ENCODE measurements at regions of chr13 and their contacts with region 1.

Region 1: DNA sequence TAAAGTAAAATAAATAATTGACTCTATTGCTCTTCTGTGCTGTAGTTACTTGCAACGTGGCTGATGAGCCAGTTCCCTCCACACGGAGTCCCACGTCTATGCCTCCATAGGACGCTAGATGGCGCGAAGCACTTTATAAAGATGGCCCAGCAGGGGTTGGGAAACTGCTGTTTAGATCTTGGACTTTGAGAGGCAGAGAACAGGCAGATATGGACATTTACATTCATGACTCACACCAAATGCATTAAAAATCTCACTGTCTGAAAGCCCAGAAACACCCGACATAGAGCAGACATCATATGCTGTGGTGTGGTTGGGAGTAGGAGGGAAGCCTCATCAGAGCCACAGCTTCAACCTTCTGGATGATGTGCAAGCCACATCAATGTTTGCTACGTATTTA is 643.1 kb upstream of the ARGLU1 start:
- DNase-seq: peak; percentile 27 to 84
- H3K4me3 ChIP-seq: no peak overlapping the region
- H3K27ac ChIP-seq: no peak overlapping the region
- H3K4me1 ChIP-seq: 0 out of 7 replicates have a peak, but pooled peaks cover 0 to 2% (median 0%) of the 10 kb centered on the region in 4 experiments
- H3K27me3 ChIP-seq: no peaks in the 10 kb centered on the region
- CTCF ChIP-seq: peak; percentile 90 to 96 (median 92)
- EP300 ChIP-seq: no peak
- POLR2A ChIP-seq: no peak
- RAD21 ChIP-seq: peak; percentile 92 to 94

Region 2: GRCh38 chr13:107234319-107235073 is 23.4 kb after region 1 on chr13:
- CTCF ChIA-PET with region 1: interaction called, 11 read pairs
- POLR2A ChIA-PET with region 1: no interaction called
- DNase-seq: no peak
- H3K4me3 ChIP-seq: no peak overlapping the region
- H3K27ac ChIP-seq: no peak overlapping the region
- H3K4me1 ChIP-seq: no peaks in the 10 kb centered on the region
- H3K27me3 ChIP-seq: no peaks in the 10 kb centered on the region
- CTCF ChIP-seq: no peak
- EP300 ChIP-seq: no peak
- POLR2A ChIP-seq: no peak
- RAD21 ChIP-seq: no peak

Region 3: GRCh38 chr13:107276936-107277335 is 65.9 kb after region 1 on chr13:
- CTCF ChIA-PET with region 1: interaction called, 10 read pairs
- POLR2A ChIA-PET with region 1: no interaction called
- DNase-seq: no peak
- H3K4me3 ChIP-seq: no peak overlapping the region
- H3K27ac ChIP-seq: no peak overlapping the region
- H3K4me1 ChIP-seq: no peaks in the 10 kb centered on the region
- H3K27me3 ChIP-seq: no peaks in the 10 kb centered on the region
- CTCF ChIP-seq: no peak
- EP300 ChIP-seq: no peak
- POLR2A ChIP-seq: no peak
- RAD21 ChIP-seq: no peak

Region 4: GRCh38 chr13:107373551-107373950 is 162.5 kb after region 1 on chr13:
- CTCF ChIA-PET with region 1: interaction called, 11 read pairs
- POLR2A ChIA-PET with region 1: no interaction called
- DNase-seq: no peak
- H3K4me3 ChIP-seq: no peak overlapping the region
- H3K27ac ChIP-seq: no peak overlapping the region
- H3K4me1 ChIP-seq: peaks cover 0 to 1% (median 0%) of the 10 kb centered on the region in 4 experiments; a peak in 1 of 7 replicates
- H3K27me3 ChIP-seq: no peaks in the 10 kb centered on the region
- CTCF ChIP-seq: peak in 2 of 3 experiments; percentile 57 to 70; a peak in 3 of 4 replicates
- EP300 ChIP-seq: no peak
- POLR2A ChIP-seq: no peak
- RAD21 ChIP-seq: peak; percentile 70 to 78

Region 5: DNA sequence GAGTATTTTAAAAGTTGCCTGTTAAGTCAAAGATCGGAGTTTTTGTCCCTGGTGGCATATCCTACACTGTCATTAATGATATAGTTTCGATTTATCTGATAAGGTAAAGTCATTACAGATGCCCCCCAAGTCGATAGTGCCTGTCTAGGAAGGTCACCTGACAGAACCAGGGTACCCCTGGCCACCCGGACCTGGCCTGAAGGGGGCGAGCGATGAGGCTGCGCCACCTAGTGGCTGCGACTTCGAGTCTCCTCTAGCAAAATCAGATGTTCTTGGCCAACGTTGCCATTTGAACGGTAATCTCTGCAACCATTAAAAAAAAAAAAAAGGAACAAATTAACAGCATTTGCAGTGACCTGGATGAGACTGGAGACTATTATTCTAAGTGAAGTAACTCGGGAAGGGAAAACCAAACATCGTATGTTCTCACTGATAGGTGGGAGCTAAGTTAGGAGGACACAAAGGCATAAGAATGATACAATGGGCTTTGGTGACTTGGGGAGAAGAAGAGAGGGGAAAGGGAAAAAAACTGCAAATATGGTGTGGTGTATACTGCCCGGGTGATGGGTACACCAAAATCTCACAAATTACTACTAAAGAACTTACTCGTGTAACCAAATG is 439.1 kb after region 1 on chr13:
- CTCF ChIA-PET with region 1: interaction called, 12 read pairs
- POLR2A ChIA-PET with region 1: no interaction called
- DNase-seq: peak; percentile 47 to 85
- H3K4me3 ChIP-seq: no peak overlapping the region
- H3K27ac ChIP-seq: no peak overlapping the region
- H3K4me1 ChIP-seq: no peaks in the 10 kb centered on the region
- H3K27me3 ChIP-seq: no peaks in the 10 kb centered on the region
- CTCF ChIP-seq: peak; percentile 88 to 100 (median 98)
- EP300 ChIP-seq: no peak
- POLR2A ChIP-seq: no peak
- RAD21 ChIP-seq: peak; percentile 90 to 92